ENCODE measurements at regions of chr15 and their contacts with region 1.

Region 1: GRCh38 chr15:57861036-57861638 is 154.6 kb downstream of the POLR2M start:
- DNase-seq: no peak
- ATAC-seq: no peak
- H3K4me3 Mint-ChIP-seq: no peak overlapping the region
- H3K27ac Mint-ChIP-seq: no peak overlapping the region
- H3K4me1 Mint-ChIP-seq: no peaks in the 10 kb centered on the region
- H3K27me3 Mint-ChIP-seq: peaks cover 28% of the 10 kb centered on the region
- CTCF ChIP-seq: peak; percentile 86

Region 2: GRCh38 chr15:57340682-57341259 is 520.4 kb before region 1 on chr15:
- CTCF ChIA-PET with region 1: interaction called, 4 read pairs
- POLR2A ChIA-PET with region 1: no interaction called
- intact Hi-C with region 1: loop called (anchors 5 kb)
- DNase-seq: no peak
- ATAC-seq: peak; percentile 58
- H3K4me3 Mint-ChIP-seq: no peak overlapping the region
- H3K27ac Mint-ChIP-seq: no peak overlapping the region
- H3K4me1 Mint-ChIP-seq: peaks cover 2% of the 10 kb centered on the region
- H3K27me3 Mint-ChIP-seq: peaks cover 9% of the 10 kb centered on the region
- CTCF ChIP-seq: peak; percentile 79

Region 3: GRCh38 chr15:57849317-57849716 is 11.8 kb before region 1 on chr15:
- CTCF ChIA-PET with region 1: interaction called, 22 read pairs
- POLR2A ChIA-PET with region 1: no interaction called
- intact Hi-C with region 1: no loop called
- DNase-seq: no peak
- ATAC-seq: no peak
- H3K4me3 Mint-ChIP-seq: no peak overlapping the region
- H3K27ac Mint-ChIP-seq: no peak overlapping the region
- H3K4me1 Mint-ChIP-seq: no peaks in the 10 kb centered on the region
- H3K27me3 Mint-ChIP-seq: peaks cover 20% of the 10 kb centered on the region
- CTCF ChIP-seq: no peak

Region 4: GRCh38 chr15:57872281-57873030 is 11.3 kb after region 1 on chr15:
- CTCF ChIA-PET with region 1: interaction called, 21 read pairs
- POLR2A ChIA-PET with region 1: no interaction called
- intact Hi-C with region 1: no loop called
- DNase-seq: no peak
- ATAC-seq: no peak
- H3K4me3 Mint-ChIP-seq: no peak overlapping the region
- H3K27ac Mint-ChIP-seq: no peak overlapping the region
- H3K4me1 Mint-ChIP-seq: peaks cover 9% of the 10 kb centered on the region
- H3K27me3 Mint-ChIP-seq: peaks cover 25% of the 10 kb centered on the region
- CTCF ChIP-seq: no peak

Region 5: GRCh38 chr15:58182460-58183163 is 321.5 kb after region 1 on chr15:
- CTCF ChIA-PET with region 1: no interaction called
- POLR2A ChIA-PET with region 1: no interaction called
- intact Hi-C with region 1: loop called (anchors 5 kb)
- DNase-seq: no peak
- ATAC-seq: no peak
- H3K4me3 Mint-ChIP-seq: no peak overlapping the region
- H3K27ac Mint-ChIP-seq: no peak overlapping the region
- H3K4me1 Mint-ChIP-seq: no peaks in the 10 kb centered on the region
- H3K27me3 Mint-ChIP-seq: peaks cover 33% of the 10 kb centered on the region
- CTCF ChIP-seq: no peak

Region 6: GRCh38 chr15:58423831-58424608 is 562.9 kb after region 1 on chr15:
- CTCF ChIA-PET with region 1: no interaction called
- POLR2A ChIA-PET with region 1: no interaction called
- intact Hi-C with region 1: no loop called
- DNase-seq: no peak
- ATAC-seq: no peak
- H3K4me3 Mint-ChIP-seq: no peak overlapping the region
- H3K27ac Mint-ChIP-seq: no peak overlapping the region
- H3K4me1 Mint-ChIP-seq: no peaks in the 10 kb centered on the region
- H3K27me3 Mint-ChIP-seq: no peaks in the 10 kb centered on the region
- CTCF ChIP-seq: no peak

Measured in activated B cell treated with CpG ODN at 0.5 μM for 24 hours (primary cell).